Ovary (tissue), 10 donors: ENCODE measurements at regions of chr5 and their contacts with region 1.

Region 1: GRCh38 chr5:126676195-126676624 is 75.5 kb downstream of the PHAX start:
- DNase-seq: peak; percentile 19 to 66 (median 35)
- H3K4me3 ChIP-seq: no peak overlapping the region
- H3K27ac ChIP-seq: no peak overlapping the region
- H3K4me1 ChIP-seq: no peaks in the 10 kb centered on the region
- H3K27me3 ChIP-seq: no peaks in the 10 kb centered on the region
- CTCF ChIP-seq: peak; percentile 48 to 69 (median 60)
- EP300 ChIP-seq: no peak
- POLR2A ChIP-seq: no peak

Region 2: DNA sequence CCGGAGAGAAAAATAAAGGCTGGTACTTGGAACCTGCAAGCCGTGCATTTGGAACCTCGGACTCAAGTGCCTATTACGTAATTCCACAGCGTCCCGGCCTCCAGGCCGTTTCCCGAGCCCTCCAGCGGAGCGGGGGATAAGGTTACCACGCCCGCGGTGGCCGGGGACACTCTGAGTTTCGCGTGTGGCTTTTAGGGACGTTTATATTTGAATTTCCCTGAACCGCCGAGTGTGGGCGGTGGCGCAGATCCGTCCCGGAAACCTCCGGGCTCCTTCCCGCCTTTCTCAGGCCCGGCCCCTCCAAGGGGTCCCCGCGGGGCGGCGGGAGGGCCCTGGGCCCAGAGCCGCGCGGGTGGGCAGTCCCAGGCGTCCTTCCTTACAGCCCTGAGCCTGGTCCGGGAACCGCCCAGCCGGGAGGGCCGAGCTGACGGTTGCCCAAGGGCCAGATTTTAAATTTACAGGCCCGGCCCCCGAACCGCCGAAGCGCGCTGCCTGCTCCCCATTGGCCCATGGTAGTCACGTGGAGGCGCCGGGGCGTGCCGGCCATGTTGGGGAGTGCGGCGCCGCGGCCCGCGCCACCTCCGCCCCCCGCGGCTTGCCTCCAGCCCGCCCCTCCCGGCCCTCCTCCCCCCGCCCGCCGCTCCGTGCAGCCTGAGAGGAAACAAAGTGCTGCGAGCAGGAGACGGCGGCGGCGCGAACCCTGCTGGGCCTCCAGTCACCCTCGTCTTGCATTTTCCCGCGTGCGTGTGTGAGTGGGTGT is 100.5 kb after region 1 on chr5 and contains the start of gene LMNB1:
- intact Hi-C with region 1: loop called in 2 of 4 experiments (anchors 5 to 10 kb)
- DNase-seq: peak; percentile 91 to 94 (median 94)
- H3K4me3 ChIP-seq: peak within 1 kb of the TSS; percentile 75
- H3K27ac ChIP-seq: peak within 1 kb of the TSS; percentile 51 to 96
- H3K4me1 ChIP-seq: no peaks in the 10 kb centered on the region
- H3K27me3 ChIP-seq: no peaks in the 10 kb centered on the region
- CTCF ChIP-seq: peak in 1 of 3 donors; percentile 14
- EP300 ChIP-seq: peak; percentile 32
- POLR2A ChIP-seq: no peak
- total RNA-seq, gene LMNB1: 3.0 to 10.0 (median 8.3) TPM

Region 3: GRCh38 chr5:126808521-126808988 is 132.3 kb after region 1 on chr5:
- intact Hi-C with region 1: loop called in 2 of 4 experiments (anchors 10 kb)
- DNase-seq: no peak
- H3K4me3 ChIP-seq: no peak overlapping the region
- H3K27ac ChIP-seq: no peak overlapping the region
- H3K4me1 ChIP-seq: no peaks in the 10 kb centered on the region
- H3K27me3 ChIP-seq: no peaks in the 10 kb centered on the region
- CTCF ChIP-seq: no peak
- EP300 ChIP-seq: no peak
- POLR2A ChIP-seq: no peak